ENCODE measurements at regions of chr3 and their contacts with region 1.

Region 1: DNA sequence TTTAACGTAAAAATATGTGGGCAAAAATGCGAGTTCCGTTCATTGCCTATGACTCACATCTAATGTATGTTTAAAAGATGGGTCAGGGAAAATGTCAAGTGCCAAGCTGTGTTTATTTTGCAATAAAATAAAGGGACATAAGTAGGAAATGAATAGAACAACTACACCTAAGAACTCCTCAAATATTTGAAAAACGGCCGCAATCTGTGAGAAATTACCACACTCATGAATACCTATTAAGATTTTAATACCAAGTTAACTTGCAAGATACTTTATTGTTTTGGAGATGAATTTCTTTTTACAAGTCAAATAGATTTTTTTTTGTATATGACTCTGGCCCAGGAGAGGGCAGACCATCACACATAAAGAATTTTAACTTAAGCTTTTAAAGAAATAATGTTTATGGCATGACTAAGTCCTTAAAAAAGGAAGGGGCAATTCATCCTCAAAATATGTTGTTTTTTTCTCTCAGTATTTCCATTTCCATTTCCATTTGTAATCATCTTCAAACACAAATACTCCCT is 152.7 kb downstream of the SUCNR1 start:
- DNase-seq: peak in 2 of 9 experiments; percentile 7 to 25
- ATAC-seq: no peak
- H3K4me3 ChIP-seq: no peak overlapping the region
- H3K4me3 Mint-ChIP-seq: no peak overlapping the region
- H3K27ac ChIP-seq: no peak overlapping the region
- H3K27ac Mint-ChIP-seq: no peak overlapping the region
- H3K4me1 ChIP-seq: no peaks in the 10 kb centered on the region
- H3K4me1 Mint-ChIP-seq: no peaks in the 10 kb centered on the region
- H3K27me3 ChIP-seq: no peaks in the 10 kb centered on the region
- H3K27me3 Mint-ChIP-seq: peaks cover 6% of the 10 kb centered on the region
- CTCF ChIP-seq: no peak

Region 2: DNA sequence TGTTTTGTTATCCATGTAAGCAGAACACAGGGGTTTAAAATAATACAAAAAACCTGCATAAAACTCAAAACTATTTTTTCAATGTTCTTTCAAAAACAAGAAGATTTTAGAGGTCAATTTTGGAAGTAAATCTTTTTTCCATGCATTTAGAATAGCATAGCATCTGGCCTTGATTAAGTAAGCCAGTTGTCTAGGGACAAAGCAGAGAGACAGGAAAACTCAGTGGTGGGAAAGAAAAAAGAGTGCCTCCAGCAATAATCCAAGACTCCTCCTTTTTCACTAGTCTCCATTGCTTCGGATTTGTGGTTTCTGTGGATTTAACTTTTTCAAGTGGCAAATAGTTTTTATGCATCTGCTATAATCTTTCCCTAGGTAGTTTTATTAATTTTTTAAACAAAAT is 63.7 kb before region 1 on chr3:
- CTCF ChIA-PET with region 1: no interaction called
- POLR2A ChIA-PET with region 1: no interaction called
- intact Hi-C with region 1: loop called in 1 of 2 experiments (anchors 2 kb)
- DNase-seq: no peak
- ATAC-seq: no peak
- H3K4me3 ChIP-seq: no peak overlapping the region
- H3K4me3 Mint-ChIP-seq: no peak overlapping the region
- H3K27ac ChIP-seq: no peak overlapping the region
- H3K27ac Mint-ChIP-seq: no peak overlapping the region
- H3K4me1 ChIP-seq: no peaks in the 10 kb centered on the region
- H3K4me1 Mint-ChIP-seq: no peaks in the 10 kb centered on the region
- H3K27me3 ChIP-seq: no peaks in the 10 kb centered on the region
- H3K27me3 Mint-ChIP-seq: no peaks in the 10 kb centered on the region
- CTCF ChIP-seq: no peak

Region 3: DNA sequence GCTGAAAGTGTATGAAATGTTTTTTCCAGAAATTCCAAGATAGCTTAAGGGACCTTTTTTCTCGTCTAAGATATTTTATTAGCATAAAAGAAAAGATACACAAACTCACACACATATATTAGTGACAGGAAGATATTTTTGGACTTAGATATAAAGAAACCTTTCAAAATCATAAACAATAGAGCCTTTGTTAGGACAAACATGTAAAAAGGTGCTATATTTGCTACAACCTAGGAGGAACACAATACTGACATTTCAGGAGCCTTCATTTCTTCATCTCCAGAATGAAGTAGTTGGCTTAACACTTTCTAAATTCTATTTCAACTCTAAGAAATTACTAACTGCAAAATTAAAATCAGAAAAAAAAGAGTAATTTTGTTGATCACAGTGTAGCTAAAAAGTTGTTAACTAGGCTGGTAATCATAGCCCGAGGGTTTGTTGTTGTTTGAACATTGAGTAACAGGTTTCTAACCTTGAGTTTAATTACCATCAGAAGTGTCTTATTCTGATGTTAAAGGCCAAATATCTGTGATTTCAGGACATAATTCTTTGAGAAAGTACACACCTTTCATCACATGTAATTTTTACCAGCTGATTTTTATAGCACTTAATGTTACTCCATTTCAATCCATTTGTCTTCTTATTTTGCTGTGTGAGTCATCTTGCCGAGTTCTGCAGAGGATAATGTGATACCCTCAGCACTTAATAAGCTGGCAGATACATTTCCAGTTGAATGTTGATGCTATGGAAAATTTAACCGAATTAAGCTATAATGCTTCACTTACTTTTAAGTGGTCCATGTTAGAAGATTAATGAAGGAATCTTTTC is 339.9 kb after region 1 on chr3:
- CTCF ChIA-PET with region 1: no interaction called
- POLR2A ChIA-PET with region 1: no interaction called
- intact Hi-C with region 1: no loop called
- DNase-seq: no peak
- ATAC-seq: no peak
- H3K4me3 ChIP-seq: no peak overlapping the region
- H3K4me3 Mint-ChIP-seq: no peak overlapping the region
- H3K27ac ChIP-seq: peak overlapping the region in 1 of 2 experiments; percentile 25
- H3K27ac Mint-ChIP-seq: peak overlapping the region; percentile 25
- H3K4me1 ChIP-seq: peaks cover 35% of the 10 kb centered on the region
- H3K4me1 Mint-ChIP-seq: peaks cover 80% of the 10 kb centered on the region
- H3K27me3 ChIP-seq: no peaks in the 10 kb centered on the region
- H3K27me3 Mint-ChIP-seq: no peaks in the 10 kb centered on the region
- CTCF ChIP-seq: no peak

Region 4: DNA sequence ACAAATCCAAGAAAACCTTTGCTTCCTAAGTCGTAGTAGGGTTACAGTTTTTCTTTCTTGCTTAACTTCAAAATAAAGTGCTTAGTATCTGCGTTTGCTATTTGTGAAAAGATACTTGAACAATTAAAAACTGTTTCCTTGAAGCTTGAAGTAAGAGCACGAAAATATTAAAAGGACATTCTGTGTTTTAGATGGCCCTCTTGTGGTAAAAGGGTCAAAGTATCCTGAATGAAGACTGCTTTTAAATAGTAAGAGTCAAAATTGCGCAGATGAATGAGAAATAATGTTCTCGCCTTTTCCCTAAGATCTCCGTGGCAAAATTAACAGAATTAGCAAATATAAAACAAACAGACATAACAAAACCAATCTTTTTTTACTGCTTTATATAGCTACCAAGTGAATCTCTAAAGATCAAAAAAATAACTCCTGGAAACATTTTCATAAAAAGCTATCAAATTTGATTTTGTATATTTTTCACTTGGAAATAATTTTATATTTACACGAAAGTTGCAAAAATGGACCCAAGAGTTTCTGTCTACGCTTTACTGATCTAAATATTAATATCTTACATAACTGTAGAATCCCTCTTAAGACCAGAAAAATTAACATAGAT is 418.0 kb after region 1 on chr3:
- CTCF ChIA-PET with region 1: no interaction called
- POLR2A ChIA-PET with region 1: no interaction called
- intact Hi-C with region 1: loop called in 1 of 2 experiments (anchors 10 kb)
- DNase-seq: peak in 2 of 9 experiments; percentile 53 to 70
- ATAC-seq: peak; percentile 46
- H3K4me3 ChIP-seq: no peak overlapping the region
- H3K4me3 Mint-ChIP-seq: peak overlapping the region; percentile 0
- H3K27ac ChIP-seq: no peak overlapping the region
- H3K27ac Mint-ChIP-seq: peak overlapping the region; percentile 55
- H3K4me1 ChIP-seq: peaks cover 55% of the 10 kb centered on the region
- H3K4me1 Mint-ChIP-seq: peaks cover 73% of the 10 kb centered on the region
- H3K27me3 ChIP-seq: no peaks in the 10 kb centered on the region
- H3K27me3 Mint-ChIP-seq: no peaks in the 10 kb centered on the region
- CTCF ChIP-seq: peak; percentile 68

Measured in CD8-positive, alpha-beta T cell (primary cell).